ENCODE measurements at regions of chrX and their contacts with region 1.

Region 1: DNA sequence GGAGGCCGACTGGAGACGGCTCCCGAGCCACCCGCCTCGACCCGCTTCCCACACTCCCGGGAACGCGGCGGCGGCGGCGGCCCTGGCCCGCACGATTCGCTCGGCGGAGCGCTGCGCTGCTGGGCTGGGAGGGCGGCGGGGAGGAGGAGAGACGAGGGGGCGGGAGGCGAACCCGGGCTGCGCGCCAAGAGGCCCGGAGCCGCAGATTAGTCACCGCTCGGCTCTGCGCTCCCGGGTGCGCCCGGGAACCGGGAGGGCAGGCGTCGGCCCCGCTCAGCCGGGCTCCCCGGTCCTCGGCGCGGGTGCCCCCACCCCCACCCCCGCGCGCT is 11.2 kb upstream of the BCOR start:
- DNase-seq: peak; percentile 71 to 82
- ATAC-seq: peak; percentile 37 to 43
- H3K4me3 ChIP-seq: peak overlapping the region; percentile 53 to 79 (median 66)
- H3K27ac ChIP-seq: peak overlapping the region; percentile 86 to 95 (median 92)
- H3K4me1 ChIP-seq: peaks cover 6 to 12% of the 10 kb centered on the region in 2 donors
- H3K27me3 ChIP-seq: peaks cover 0 to 15% (median 10%) of the 10 kb centered on the region in 3 donors
- CTCF ChIP-seq: no peak
- POLR2A ChIP-seq: peak; percentile 74 to 78

Region 2: GRCh38 chrX:40132751-40133150 is 23.8 kb after region 1 on chrX:
- in situ Hi-C with region 1: no loop called
- intact Hi-C with region 1: loop called (anchors 1 kb)
- DNase-seq: peak; percentile 67 to 85
- ATAC-seq: peak; percentile 90 to 96
- H3K4me3 ChIP-seq: no peak overlapping the region
- H3K27ac ChIP-seq: peak overlapping the region; percentile 59 to 72 (median 69)
- H3K4me1 ChIP-seq: peaks cover 10 to 11% of the 10 kb centered on the region in 2 donors
- H3K27me3 ChIP-seq: no peaks in the 10 kb centered on the region
- CTCF ChIP-seq: no peak
- POLR2A ChIP-seq: peak in 1 of 2 donors; percentile 20

Region 3: GRCh38 chrX:40153335-40154249 is 44.7 kb after region 1 on chrX:
- in situ Hi-C with region 1: no loop called
- intact Hi-C with region 1: loop called (anchors 1 kb)
- DNase-seq: peak in 1 of 2 donors; percentile 30
- ATAC-seq: peak; percentile 6 to 20
- H3K4me3 ChIP-seq: peak overlapping the region; percentile 50 to 63 (median 60)
- H3K27ac ChIP-seq: peak overlapping the region; percentile 77 to 86 (median 82)
- H3K4me1 ChIP-seq: peaks cover 4 to 18% of the 10 kb centered on the region in 2 donors
- H3K27me3 ChIP-seq: peaks cover 0 to 22% (median 5%) of the 10 kb centered on the region in 3 donors
- CTCF ChIP-seq: peak in 1 of 5 experiments; percentile 20
- POLR2A ChIP-seq: no peak

Region 4: GRCh38 chrX:40175511-40176350 is 66.8 kb after region 1 on chrX:
- in situ Hi-C with region 1: no loop called
- intact Hi-C with region 1: loop called (anchors 2 kb)
- DNase-seq: peak in 1 of 2 donors; percentile 50
- ATAC-seq: peak; percentile 47 to 53
- H3K4me3 ChIP-seq: peak overlapping the region; percentile 62 to 70 (median 66)
- H3K27ac ChIP-seq: peak overlapping the region; percentile 82 to 89 (median 85)
- H3K4me1 ChIP-seq: peaks cover 2 to 21% of the 10 kb centered on the region in 2 donors
- H3K27me3 ChIP-seq: peaks cover 0 to 40% (median 23%) of the 10 kb centered on the region in 3 donors
- CTCF ChIP-seq: no peak
- POLR2A ChIP-seq: peak in 1 of 2 donors; percentile 21

Measured in gastrocnemius medialis (tissue), 4 donors.